Stomach (tissue), 19 donors: ENCODE measurements at regions of chr7 and their contacts with region 1.

Region 1: GRCh38 chr7:31811650-31812461 is 124.8 kb downstream of the PPP1R17 start:
- DNase-seq: peak in 1 of 2 donors; percentile 46
- H3K4me3 ChIP-seq: no peak overlapping the region
- H3K27ac ChIP-seq: peak overlapping the region in 3 of 5 donors; percentile 3 to 69 (median 56)
- H3K4me1 ChIP-seq: no peaks in the 10 kb centered on the region
- H3K27me3 ChIP-seq: no peaks in the 10 kb centered on the region
- CTCF ChIP-seq: no peak
- EP300 ChIP-seq: no peak
- POLR2A ChIP-seq: no peak

Region 2: GRCh38 chr7:31563522-31563921 is 248.3 kb before region 1 on chr7:
- intact Hi-C with region 1: no loop called
- DNase-seq: no peak
- H3K4me3 ChIP-seq: no peak overlapping the region
- H3K27ac ChIP-seq: no peak overlapping the region
- H3K4me1 ChIP-seq: no peaks in the 10 kb centered on the region
- H3K27me3 ChIP-seq: no peaks in the 10 kb centered on the region
- CTCF ChIP-seq: no peak
- EP300 ChIP-seq: no peak
- POLR2A ChIP-seq: no peak

Region 3: DNA sequence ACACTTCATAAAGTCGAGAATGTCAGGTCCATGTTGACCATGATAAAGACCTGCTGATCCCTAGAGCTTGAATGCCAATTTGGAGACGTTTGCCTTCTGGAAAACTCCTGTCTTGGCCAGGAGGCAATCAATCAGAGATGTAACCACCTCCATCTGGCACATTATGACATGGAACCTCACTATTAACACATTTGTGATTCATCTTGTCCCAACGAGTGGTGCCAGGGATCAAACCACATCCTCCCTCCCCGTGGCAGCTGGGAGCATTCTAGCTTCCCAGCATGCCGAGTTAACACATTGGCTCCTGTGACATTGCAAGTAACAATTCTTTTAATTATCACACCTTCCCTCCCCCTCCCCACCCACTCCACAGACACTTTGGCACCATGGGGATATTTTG is 208.8 kb before region 1 on chr7:
- intact Hi-C with region 1: no loop called
- DNase-seq: no peak
- H3K4me3 ChIP-seq: no peak overlapping the region
- H3K27ac ChIP-seq: no peak overlapping the region
- H3K4me1 ChIP-seq: no peaks in the 10 kb centered on the region
- H3K27me3 ChIP-seq: no peaks in the 10 kb centered on the region
- CTCF ChIP-seq: no peak
- EP300 ChIP-seq: no peak
- POLR2A ChIP-seq: no peak

Region 4: DNA sequence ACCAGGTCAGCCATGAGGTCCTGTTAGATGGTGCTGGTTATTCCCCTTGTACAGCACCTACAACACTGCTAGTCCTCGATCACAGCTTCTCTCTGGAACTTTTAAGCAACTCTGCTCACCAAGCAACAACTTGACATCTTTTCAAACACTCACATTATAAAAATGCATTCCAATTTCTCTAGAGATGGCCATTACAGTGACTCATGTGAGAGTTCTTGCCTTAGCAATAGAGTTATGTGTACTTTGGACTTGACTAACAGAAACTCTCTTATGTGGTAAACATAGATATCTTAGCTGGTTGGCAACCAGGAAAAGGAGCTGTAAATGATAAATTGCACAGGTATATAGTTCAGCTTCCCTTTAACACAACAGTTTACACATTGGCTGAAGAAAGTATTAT is 136.2 kb after region 1 on chr7:
- intact Hi-C with region 1: no loop called
- DNase-seq: peak in 1 of 2 donors; percentile 84
- H3K4me3 ChIP-seq: no peak overlapping the region
- H3K27ac ChIP-seq: peak overlapping the region in 4 of 5 donors; percentile 23 to 59 (median 44)
- H3K4me1 ChIP-seq: peaks cover 8 to 21% (median 15%) of the 10 kb centered on the region in 4 donors
- H3K27me3 ChIP-seq: no peaks in the 10 kb centered on the region
- CTCF ChIP-seq: no peak
- EP300 ChIP-seq: no peak
- POLR2A ChIP-seq: no peak

Region 5: DNA sequence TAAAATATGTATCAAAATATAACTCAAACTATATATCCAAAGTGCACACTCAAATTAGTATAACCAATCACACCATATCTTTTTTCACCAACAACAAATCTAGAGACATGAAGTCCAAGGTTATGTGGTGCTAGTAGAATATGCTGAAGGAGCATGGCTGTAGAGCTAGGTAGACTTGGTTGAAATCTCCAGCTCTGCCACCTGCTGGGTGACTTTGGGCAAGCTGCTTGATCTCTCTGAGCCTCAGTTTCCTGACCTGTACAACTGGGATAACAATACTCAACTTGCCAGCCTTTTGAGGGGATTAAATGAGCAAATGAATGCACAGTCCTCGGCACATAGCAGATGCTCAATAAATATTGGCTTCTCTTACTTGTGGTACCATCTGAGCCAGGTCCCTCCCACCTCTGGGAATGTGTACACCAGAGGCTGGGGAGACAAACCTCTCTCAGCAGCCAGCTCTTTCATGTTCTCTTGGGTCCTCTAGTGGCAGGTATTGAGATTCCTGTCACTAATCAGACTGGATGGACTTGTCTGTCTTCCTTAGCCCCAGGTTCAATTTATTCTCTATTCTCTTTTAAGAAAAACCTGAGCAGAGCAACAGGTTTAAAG is 352.6 kb after region 1 on chr7:
- intact Hi-C with region 1: loop called (anchors 10 kb)
- DNase-seq: peak in 1 of 2 donors; percentile 54
- H3K4me3 ChIP-seq: no peak overlapping the region
- H3K27ac ChIP-seq: no peak overlapping the region
- H3K4me1 ChIP-seq: peaks cover 0 to 15% (median 1%) of the 10 kb centered on the region in 4 donors
- H3K27me3 ChIP-seq: no peaks in the 10 kb centered on the region
- CTCF ChIP-seq: peak in 3 of 7 experiments; percentile 41 to 59 (median 53)
- EP300 ChIP-seq: no peak
- POLR2A ChIP-seq: no peak